IMR-90 (cell line): ENCODE measurements at regions of chr1 and their contacts with region 1.

Region 1: GRCh38 chr1:155323798-155324610 is 3.3 kb downstream of the RUSC1 start:
- DNase-seq: peak; percentile 93
- ATAC-seq: peak; percentile 73
- H3K4me3 ChIP-seq: peak overlapping the region; percentile 58
- H3K27ac ChIP-seq: peak overlapping the region; percentile 95
- H3K4me1 ChIP-seq: peaks cover 18% of the 10 kb centered on the region; the same call in 1 of the 2 replicates
- H3K27me3 ChIP-seq: no peaks in the 10 kb centered on the region
- CTCF ChIP-seq: no peak
- POLR2A ChIP-seq: peak; percentile 64
- RAD21 ChIP-seq: no peak

Region 2: GRCh38 chr1:155208541-155209311 is 115.3 kb before region 1 on chr1 and contains the start of gene MTX1:
- CTCF ChIA-PET with region 1: no interaction called
- POLR2A ChIA-PET with region 1: no interaction called
- dilution Hi-C with region 1: no loop called
- in situ Hi-C with region 1: no loop called
- intact Hi-C with region 1: loop called (anchors 10 kb)
- DNase-seq: peak; percentile 68
- ATAC-seq: peak; percentile 88
- H3K4me3 ChIP-seq: peak within 1 kb of the TSS; percentile 100
- H3K27ac ChIP-seq: peak within 1 kb of the TSS; percentile 86
- H3K4me1 ChIP-seq: peaks cover 15% of the 10 kb centered on the region
- H3K27me3 ChIP-seq: no peaks in the 10 kb centered on the region
- CTCF ChIP-seq: no peak
- POLR2A ChIP-seq: peak; percentile 89
- RAD21 ChIP-seq: no peak
- total RNA-seq, gene MTX1: 51.4 and 67.2 TPM in 2 replicates

Region 3: GRCh38 chr1:155277070-155277895 is 46.7 kb before region 1 on chr1 and contains the start of gene HCN3:
- CTCF ChIA-PET with region 1: no interaction called
- POLR2A ChIA-PET with region 1: no interaction called
- dilution Hi-C with region 1: no loop called
- in situ Hi-C with region 1: loop called (anchors 5 kb)
- intact Hi-C with region 1: loop called (anchors 1 kb)
- DNase-seq: peak; percentile 93
- ATAC-seq: peak; percentile 83
- H3K4me3 ChIP-seq: peak within 1 kb of the TSS; percentile 69
- H3K27ac ChIP-seq: peak within 1 kb of the TSS; percentile 28; the same call in 1 of the 2 replicates
- H3K4me1 ChIP-seq: peaks cover 1% of the 10 kb centered on the region
- H3K27me3 ChIP-seq: no peaks in the 10 kb centered on the region
- CTCF ChIP-seq: peak; percentile 78
- POLR2A ChIP-seq: no peak
- RAD21 ChIP-seq: peak; percentile 49
- total RNA-seq, gene HCN3: 0.36 and 0.83 TPM in 2 replicates

Region 4: DNA sequence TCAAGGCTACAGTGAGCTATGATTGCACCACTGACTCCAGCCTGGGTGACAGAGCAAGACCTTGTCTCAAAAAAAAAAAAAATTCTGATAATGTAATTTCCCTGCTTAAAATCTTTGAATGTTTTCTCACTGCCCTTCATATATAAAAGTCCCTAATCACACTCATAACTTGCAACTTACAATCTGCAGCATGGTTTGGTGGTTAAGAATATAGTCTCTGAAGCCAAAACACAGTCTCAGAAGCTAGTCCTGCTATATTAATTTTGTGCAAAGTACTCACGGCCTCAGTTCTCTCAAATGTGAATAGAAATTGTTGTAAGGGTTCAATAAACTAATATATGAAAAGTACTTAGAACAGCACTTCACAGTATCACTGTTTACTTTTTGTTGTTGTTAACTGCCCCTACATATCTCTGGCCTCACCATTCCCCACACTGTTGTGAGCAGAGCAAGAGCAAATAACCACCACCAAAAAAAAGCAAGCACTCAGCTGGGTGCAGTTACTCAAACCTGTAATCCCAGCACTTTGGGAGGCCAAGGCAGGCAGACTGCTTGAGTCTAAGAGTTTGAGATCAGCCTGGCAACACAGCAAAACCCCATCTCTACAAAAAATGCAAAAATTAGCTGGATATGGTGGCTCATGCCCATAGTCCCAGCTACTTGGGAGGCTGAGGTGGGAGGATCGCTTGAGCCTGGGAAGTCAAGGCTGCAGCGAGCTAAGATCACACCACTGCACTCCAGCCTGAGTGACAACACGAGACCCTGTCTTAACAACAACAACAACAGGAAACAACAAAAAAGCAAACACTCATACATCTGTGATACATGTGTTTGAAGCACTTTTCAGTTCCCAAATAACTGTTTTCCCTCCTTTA is 216.2 kb after region 1 on chr1:
- CTCF ChIA-PET with region 1: no interaction called
- POLR2A ChIA-PET with region 1: interaction called, 18 read pairs
- dilution Hi-C with region 1: no loop called
- in situ Hi-C with region 1: no loop called
- intact Hi-C with region 1: no loop called
- DNase-seq: no peak
- ATAC-seq: no peak
- H3K4me3 ChIP-seq: no peak overlapping the region
- H3K27ac ChIP-seq: no peak overlapping the region
- H3K4me1 ChIP-seq: no peaks in the 10 kb centered on the region
- H3K27me3 ChIP-seq: no peaks in the 10 kb centered on the region
- CTCF ChIP-seq: no peak
- POLR2A ChIP-seq: no peak
- RAD21 ChIP-seq: no peak

Region 5: DNA sequence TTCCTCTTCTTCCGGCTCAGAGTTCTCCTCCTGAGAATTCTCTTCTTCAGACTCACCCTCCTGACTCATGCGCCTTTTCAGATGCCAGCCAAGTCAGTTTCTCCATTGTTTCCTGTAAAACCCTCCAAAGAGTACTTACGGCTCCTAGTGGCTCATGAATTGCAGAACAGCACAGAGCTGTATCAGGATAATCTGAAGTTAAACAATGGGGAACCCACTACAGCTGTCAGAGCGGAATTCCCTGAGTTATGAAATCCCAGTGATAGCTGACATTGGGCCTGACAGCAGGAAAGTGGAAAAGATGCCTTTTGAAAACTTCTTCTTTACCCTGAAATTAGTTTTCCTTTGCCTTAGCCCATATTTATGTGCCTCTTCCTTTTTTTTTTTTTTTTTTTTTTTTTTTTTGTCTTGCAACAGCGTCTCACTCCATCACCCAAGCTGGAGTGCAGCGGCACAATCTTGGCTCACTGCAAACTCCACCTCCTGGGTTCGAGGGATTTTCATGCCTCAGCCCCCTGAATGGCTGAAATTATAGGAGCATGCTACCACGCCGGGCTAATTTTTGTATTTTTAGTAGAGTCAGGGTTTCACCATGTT is 324.6 kb after region 1 on chr1:
- CTCF ChIA-PET with region 1: no interaction called
- POLR2A ChIA-PET with region 1: no interaction called
- dilution Hi-C with region 1: no loop called
- in situ Hi-C with region 1: no loop called
- intact Hi-C with region 1: loop called (anchors 5 kb)
- DNase-seq: peak; percentile 94
- ATAC-seq: peak; percentile 92
- H3K4me3 ChIP-seq: peak overlapping the region; percentile 32; the same call in 1 of the 2 replicates
- H3K27ac ChIP-seq: peak overlapping the region; percentile 69; the same call in 1 of the 2 replicates
- H3K4me1 ChIP-seq: peaks cover 8% of the 10 kb centered on the region
- H3K27me3 ChIP-seq: no peaks in the 10 kb centered on the region
- CTCF ChIP-seq: peak; percentile 83
- POLR2A ChIP-seq: 0 out of 2 replicates have a peak, but pooled peaks have one; percentile 18
- RAD21 ChIP-seq: peak; percentile 81